ENCODE measurements at regions of chr7 and their contacts with region 1.

Region 1: GRCh38 chr7:25565949-25566348 is 337.7 kb upstream of the NPVF start:
- DNase-seq: peak; percentile 29 to 74
- ATAC-seq: no peak
- H3K4me3 ChIP-seq: no peak overlapping the region
- H3K27ac ChIP-seq: no peak overlapping the region
- H3K4me1 ChIP-seq: peaks cover 5% of the 10 kb centered on the region; the same call in 1 of the 3 replicates
- CTCF ChIP-seq: peak; percentile 100
- EP300 ChIP-seq: no peak
- POLR2A ChIP-seq: no peak
- RAD21 ChIP-seq: peak; percentile 83 to 90

Region 2: GRCh38 chr7:25259587-25260243 is 306.2 kb before region 1 on chr7:
- CTCF ChIA-PET with region 1: interaction called, 56 read pairs
- POLR2A ChIA-PET with region 1: no interaction called
- DNase-seq: peak; percentile 38 to 76
- ATAC-seq: peak; percentile 84 to 95
- H3K4me3 ChIP-seq: no peak overlapping the region
- H3K27ac ChIP-seq: no peak overlapping the region
- H3K4me1 ChIP-seq: no peaks in the 10 kb centered on the region
- CTCF ChIP-seq: peak; percentile 88
- EP300 ChIP-seq: no peak
- POLR2A ChIP-seq: no peak
- RAD21 ChIP-seq: peak; percentile 86 to 90

Region 3: GRCh38 chr7:25389489-25390106 is 176.4 kb before region 1 on chr7:
- CTCF ChIA-PET with region 1: interaction called, 114 read pairs
- POLR2A ChIA-PET with region 1: no interaction called
- DNase-seq: peak; percentile 38 to 54
- ATAC-seq: peak; percentile 57 to 77; a peak in 4 of 6 replicates
- H3K4me3 ChIP-seq: no peak overlapping the region
- H3K27ac ChIP-seq: no peak overlapping the region
- H3K4me1 ChIP-seq: no peaks in the 10 kb centered on the region
- CTCF ChIP-seq: peak; percentile 59
- EP300 ChIP-seq: no peak
- POLR2A ChIP-seq: no peak
- RAD21 ChIP-seq: peak; percentile 47 to 62; a peak in 4 of 5 replicates

Region 4: GRCh38 chr7:25545124-25546008 is 20.6 kb before region 1 on chr7:
- CTCF ChIA-PET with region 1: interaction called, 10 read pairs
- POLR2A ChIA-PET with region 1: no interaction called
- DNase-seq: no peak
- ATAC-seq: no peak
- H3K4me3 ChIP-seq: no peak overlapping the region
- H3K27ac ChIP-seq: no peak overlapping the region
- H3K4me1 ChIP-seq: no peaks in the 10 kb centered on the region
- CTCF ChIP-seq: no peak
- EP300 ChIP-seq: no peak
- POLR2A ChIP-seq: no peak
- RAD21 ChIP-seq: no peak

Region 5: DNA sequence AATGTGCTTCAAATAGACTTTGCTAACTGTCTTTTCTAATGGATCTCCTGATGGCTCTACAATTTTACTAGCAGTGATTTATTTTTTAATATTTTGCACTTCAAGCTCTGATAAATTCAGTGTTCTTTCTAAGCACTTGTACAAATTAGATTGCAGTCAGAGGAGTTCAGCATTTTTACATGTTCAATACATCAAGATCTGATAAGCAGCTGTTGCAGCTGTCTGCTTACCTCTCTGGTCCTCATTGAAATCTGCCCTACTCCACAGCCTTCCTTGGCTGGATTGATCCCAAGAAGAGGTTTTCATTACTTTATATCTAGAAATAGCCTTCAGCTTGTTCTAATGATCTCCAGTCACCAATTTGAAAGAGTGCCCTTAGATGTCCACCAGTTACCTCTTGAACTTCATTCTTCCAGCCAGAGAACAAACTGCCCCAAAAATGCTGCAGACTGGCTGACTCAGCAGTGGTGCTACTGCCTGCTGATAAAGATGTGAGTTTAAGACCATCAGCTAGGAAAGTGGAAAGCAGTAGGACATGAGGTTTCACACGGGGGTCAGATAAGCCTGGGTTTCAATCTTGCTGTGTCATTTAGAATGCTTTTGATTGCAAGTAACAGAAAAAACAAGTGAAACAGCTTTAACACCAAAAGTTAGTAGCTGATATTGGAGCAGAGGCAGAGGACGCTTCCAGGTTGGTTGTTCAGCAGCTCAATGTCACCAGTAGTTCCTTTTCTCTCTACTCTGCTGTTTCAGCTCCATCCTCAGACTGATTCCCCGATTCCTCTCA is 13.2 kb after region 1 on chr7:
- CTCF ChIA-PET with region 1: interaction called, 18 read pairs
- POLR2A ChIA-PET with region 1: no interaction called
- DNase-seq: no peak
- ATAC-seq: no peak
- H3K4me3 ChIP-seq: no peak overlapping the region
- H3K27ac ChIP-seq: no peak overlapping the region
- H3K4me1 ChIP-seq: no peaks in the 10 kb centered on the region
- CTCF ChIP-seq: no peak
- EP300 ChIP-seq: no peak
- POLR2A ChIP-seq: no peak
- RAD21 ChIP-seq: no peak

Region 6: GRCh38 chr7:25851332-25852210 is 285.6 kb after region 1 on chr7:
- CTCF ChIA-PET with region 1: interaction called, 34 read pairs
- POLR2A ChIA-PET with region 1: no interaction called
- DNase-seq: peak; percentile 65 to 75
- ATAC-seq: peak; percentile 67 to 82
- H3K4me3 ChIP-seq: peak overlapping the region; percentile 22; the same call in 1 of the 3 replicates
- H3K27ac ChIP-seq: peak overlapping the region in 1 of 2 experiments; percentile 86; a peak in 2 of 6 replicates
- H3K4me1 ChIP-seq: peaks cover 52% of the 10 kb centered on the region
- CTCF ChIP-seq: peak; percentile 79
- EP300 ChIP-seq: no peak
- POLR2A ChIP-seq: no peak
- RAD21 ChIP-seq: peak; percentile 91 to 93

Region 7: DNA sequence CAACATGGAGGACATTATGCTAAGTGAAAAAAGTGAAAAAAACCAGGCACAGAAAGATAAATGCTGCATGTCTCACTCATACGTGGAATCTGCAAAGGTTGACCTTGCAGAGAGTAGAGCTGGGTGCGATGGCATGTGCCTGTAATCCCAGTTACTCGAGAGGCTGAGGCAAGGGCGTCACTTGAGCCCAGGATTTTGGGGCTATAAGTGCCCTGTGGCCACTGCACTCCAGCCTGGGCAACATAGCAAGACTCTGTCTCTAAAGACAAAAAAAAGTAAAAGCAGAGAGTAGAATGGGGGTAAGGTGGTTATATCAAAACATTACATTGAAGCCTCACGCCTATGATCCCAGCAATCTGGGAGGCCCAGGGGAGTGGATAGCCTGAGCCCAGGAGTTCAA is 658.4 kb after region 1 on chr7:
- CTCF ChIA-PET with region 1: no interaction called
- POLR2A ChIA-PET with region 1: no interaction called
- DNase-seq: no peak
- ATAC-seq: no peak
- H3K4me3 ChIP-seq: no peak overlapping the region
- H3K27ac ChIP-seq: no peak overlapping the region
- H3K4me1 ChIP-seq: no peaks in the 10 kb centered on the region
- CTCF ChIP-seq: no peak
- EP300 ChIP-seq: no peak
- POLR2A ChIP-seq: no peak
- RAD21 ChIP-seq: no peak

Measured in A549 (cell line).